HepG2 (cell line): ENCODE measurements at regions of chr12 and their contacts with region 1.

Region 1: DNA sequence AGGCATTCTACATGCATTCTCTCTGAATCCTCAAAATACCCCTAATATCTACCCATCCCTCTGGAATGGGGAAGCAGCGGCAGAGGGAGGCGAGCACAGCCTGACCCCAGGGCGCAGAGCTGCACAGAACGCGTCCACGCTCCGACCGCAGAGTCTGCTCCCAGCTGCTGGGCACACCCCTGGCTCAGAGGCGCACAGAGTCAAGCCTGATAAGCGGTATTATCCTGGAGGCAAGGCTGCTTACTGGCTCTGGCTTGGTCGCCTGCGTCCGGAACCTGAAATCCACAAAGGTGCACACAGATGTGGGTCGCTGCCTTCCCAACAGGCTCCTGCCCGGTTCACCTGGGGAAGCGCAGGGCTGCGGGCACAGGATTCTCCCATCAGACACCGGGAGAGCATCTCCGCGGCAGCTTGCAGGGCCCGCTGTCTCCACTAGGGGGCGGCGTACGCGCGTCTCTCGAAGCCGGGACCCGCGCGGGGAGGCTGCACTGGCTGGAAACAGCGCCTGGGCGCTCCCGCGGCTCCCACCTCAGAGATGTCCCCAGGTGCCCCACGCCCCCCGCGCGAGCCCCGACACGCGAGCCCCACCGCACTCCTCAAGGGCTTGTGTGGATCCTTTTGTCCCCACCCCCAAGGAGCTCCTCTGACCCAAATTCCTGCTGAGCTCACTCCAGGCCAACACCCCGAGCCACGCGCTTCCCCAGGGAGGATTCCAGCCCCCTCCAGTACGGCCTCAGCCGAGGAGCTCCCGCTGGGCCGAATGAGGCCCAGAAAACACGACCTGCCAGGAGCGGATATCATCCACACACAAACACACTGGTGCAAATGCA is 120.1 kb upstream of the FZD10 start:
- DNase-seq: no peak
- ATAC-seq: peak; percentile 23; the same call in 2 of the 3 replicates
- H3K4me3 ChIP-seq: no peak overlapping the region
- H3K27ac ChIP-seq: no peak overlapping the region
- H3K4me1 ChIP-seq: peaks cover 34% of the 10 kb centered on the region
- H3K27me3 ChIP-seq: peaks cover 0 to 5% of the 10 kb centered on the region in 2 experiments; a peak in 3 of 5 replicates
- CTCF ChIP-seq: peak; percentile 75
- EP300 ChIP-seq: no peak
- POLR2A ChIP-seq: no peak
- RAD21 ChIP-seq: no peak

Region 2: DNA sequence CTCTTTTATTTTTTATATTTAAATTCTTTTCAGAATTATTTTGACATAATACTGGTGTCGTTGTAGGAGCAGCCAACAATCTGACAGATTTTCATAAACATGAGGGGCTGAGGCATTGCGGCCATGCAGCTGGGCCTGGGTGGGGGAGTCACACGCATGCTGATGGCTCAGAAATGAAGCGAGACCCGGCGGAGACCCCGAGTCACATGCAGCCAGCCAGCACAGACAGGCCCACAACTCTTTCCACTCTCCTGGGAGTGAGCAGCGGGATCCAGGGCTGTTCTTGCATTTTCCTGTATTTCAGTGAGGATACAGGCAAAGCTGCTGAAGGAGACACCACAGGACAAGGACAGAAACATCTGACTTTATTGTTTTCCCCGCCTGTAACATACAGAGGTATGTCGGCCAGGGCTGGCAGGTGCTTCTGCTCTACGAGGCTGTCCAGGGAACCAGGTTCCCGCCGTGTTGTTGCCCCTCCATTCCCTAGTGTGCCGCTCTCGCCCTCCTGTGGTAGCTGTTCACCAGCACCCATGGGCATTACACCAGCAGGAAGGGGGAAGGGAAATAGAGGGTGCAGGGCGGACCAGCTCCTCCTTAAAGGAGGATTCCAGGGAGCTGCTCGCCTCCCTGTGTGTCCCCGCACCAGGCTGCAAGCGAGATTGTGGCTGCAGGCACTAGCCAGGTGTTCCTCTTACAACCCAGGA is 150.6 kb after region 1 on chr12:
- CTCF ChIA-PET with region 1: no interaction called
- POLR2A ChIA-PET with region 1: no interaction called
- in situ Hi-C with region 1: loop called (anchors 10 kb)
- intact Hi-C with region 1: loop called (anchors 5 kb)
- DNase-seq: peak; percentile 3
- ATAC-seq: peak; percentile 77
- H3K4me3 ChIP-seq: no peak overlapping the region
- H3K27ac ChIP-seq: no peak overlapping the region
- H3K4me1 ChIP-seq: peaks cover 14% of the 10 kb centered on the region
- H3K27me3 ChIP-seq: peaks cover 4 to 24% of the 10 kb centered on the region in 2 experiments; a peak in 4 of 5 replicates
- CTCF ChIP-seq: peak; percentile 51
- EP300 ChIP-seq: no peak
- POLR2A ChIP-seq: no peak
- RAD21 ChIP-seq: no peak

Region 3: GRCh38 chr12:130198026-130198662 is 155.9 kb after region 1 on chr12:
- CTCF ChIA-PET with region 1: no interaction called
- POLR2A ChIA-PET with region 1: no interaction called
- in situ Hi-C with region 1: loop called (anchors 10 kb)
- intact Hi-C with region 1: loop called (anchors 5 kb)
- DNase-seq: no peak
- ATAC-seq: no peak
- H3K4me3 ChIP-seq: no peak overlapping the region
- H3K27ac ChIP-seq: no peak overlapping the region
- H3K4me1 ChIP-seq: peaks cover 14% of the 10 kb centered on the region
- H3K27me3 ChIP-seq: peaks cover 6 to 16% of the 10 kb centered on the region in 2 experiments; a peak in 2 of 5 replicates
- CTCF ChIP-seq: no peak
- EP300 ChIP-seq: no peak
- POLR2A ChIP-seq: no peak
- RAD21 ChIP-seq: no peak

Region 4: GRCh38 chr12:130335517-130336392 is 293.6 kb after region 1 on chr12:
- CTCF ChIA-PET with region 1: interaction called, 17 read pairs
- POLR2A ChIA-PET with region 1: no interaction called
- in situ Hi-C with region 1: loop called (anchors 5 kb)
- intact Hi-C with region 1: loop called (anchors 1 kb)
- DNase-seq: peak; percentile 52
- ATAC-seq: peak; percentile 67
- H3K4me3 ChIP-seq: no peak overlapping the region
- H3K27ac ChIP-seq: no peak overlapping the region
- H3K4me1 ChIP-seq: no peaks in the 10 kb centered on the region
- H3K27me3 ChIP-seq: peaks cover 2 to 23% of the 10 kb centered on the region in 2 experiments
- CTCF ChIP-seq: peak; percentile 73
- EP300 ChIP-seq: no peak
- POLR2A ChIP-seq: no peak
- RAD21 ChIP-seq: peak; percentile 39; the same call in 1 of the 2 replicates